MCF 10A (cell line): ENCODE measurements at regions of chr9 and their contacts with region 1.

Region 1: GRCh38 chr9:124818431-124819281 is 34.6 kb upstream of the WDR38 start:
- DNase-seq: peak; percentile 78
- H3K4me3 Mint-ChIP-seq: peak overlapping the region; percentile 15
- H3K27ac Mint-ChIP-seq: peak overlapping the region; percentile 89
- H3K4me1 Mint-ChIP-seq: peaks cover 19% of the 10 kb centered on the region
- H3K27me3 Mint-ChIP-seq: no peaks in the 10 kb centered on the region
- CTCF ChIP-seq: no peak

Region 2: GRCh38 chr9:124658165-124659017 is 160.3 kb before region 1 on chr9:
- CTCF ChIA-PET with region 1: no interaction called
- POLR2A ChIA-PET with region 1: interaction called, 17 read pairs
- intact Hi-C with region 1: no loop called
- DNase-seq: peak; percentile 98
- H3K4me3 Mint-ChIP-seq: peak overlapping the region; percentile 98
- H3K27ac Mint-ChIP-seq: peak overlapping the region; percentile 96
- H3K4me1 Mint-ChIP-seq: peaks cover 20% of the 10 kb centered on the region
- H3K27me3 Mint-ChIP-seq: no peaks in the 10 kb centered on the region
- CTCF ChIP-seq: no peak

Region 3: GRCh38 chr9:124794902-124795491 is 23.7 kb before region 1 on chr9:
- CTCF ChIA-PET with region 1: interaction called, 13 read pairs
- POLR2A ChIA-PET with region 1: interaction called, 7 read pairs
- intact Hi-C with region 1: no loop called
- DNase-seq: peak; percentile 49
- H3K4me3 Mint-ChIP-seq: no peak overlapping the region
- H3K27ac Mint-ChIP-seq: no peak overlapping the region
- H3K4me1 Mint-ChIP-seq: peaks cover 5% of the 10 kb centered on the region
- H3K27me3 Mint-ChIP-seq: no peaks in the 10 kb centered on the region
- CTCF ChIP-seq: no peak

Region 4: GRCh38 chr9:124839612-124840299 is 21.1 kb after region 1 on chr9:
- CTCF ChIA-PET with region 1: interaction called, 17 read pairs
- POLR2A ChIA-PET with region 1: interaction called, 83 read pairs
- intact Hi-C with region 1: loop called (anchors 1 kb)
- DNase-seq: no peak
- H3K4me3 Mint-ChIP-seq: no peak overlapping the region
- H3K27ac Mint-ChIP-seq: no peak overlapping the region
- H3K4me1 Mint-ChIP-seq: peaks cover 11% of the 10 kb centered on the region
- H3K27me3 Mint-ChIP-seq: no peaks in the 10 kb centered on the region
- CTCF ChIP-seq: peak; percentile 27

Region 5: GRCh38 chr9:124868511-124869465 is 50.1 kb after region 1 on chr9:
- CTCF ChIA-PET with region 1: interaction called, 3 read pairs
- POLR2A ChIA-PET with region 1: interaction called, 47 read pairs
- intact Hi-C with region 1: no loop called
- DNase-seq: peak; percentile 86
- H3K4me3 Mint-ChIP-seq: peak overlapping the region; percentile 95
- H3K27ac Mint-ChIP-seq: peak overlapping the region; percentile 97
- H3K4me1 Mint-ChIP-seq: peaks cover 33% of the 10 kb centered on the region
- H3K27me3 Mint-ChIP-seq: no peaks in the 10 kb centered on the region
- CTCF ChIP-seq: no peak